Heart right ventricle (tissue), 16 donors: ENCODE measurements at regions of chrX and their contacts with region 1.

Region 1: DNA sequence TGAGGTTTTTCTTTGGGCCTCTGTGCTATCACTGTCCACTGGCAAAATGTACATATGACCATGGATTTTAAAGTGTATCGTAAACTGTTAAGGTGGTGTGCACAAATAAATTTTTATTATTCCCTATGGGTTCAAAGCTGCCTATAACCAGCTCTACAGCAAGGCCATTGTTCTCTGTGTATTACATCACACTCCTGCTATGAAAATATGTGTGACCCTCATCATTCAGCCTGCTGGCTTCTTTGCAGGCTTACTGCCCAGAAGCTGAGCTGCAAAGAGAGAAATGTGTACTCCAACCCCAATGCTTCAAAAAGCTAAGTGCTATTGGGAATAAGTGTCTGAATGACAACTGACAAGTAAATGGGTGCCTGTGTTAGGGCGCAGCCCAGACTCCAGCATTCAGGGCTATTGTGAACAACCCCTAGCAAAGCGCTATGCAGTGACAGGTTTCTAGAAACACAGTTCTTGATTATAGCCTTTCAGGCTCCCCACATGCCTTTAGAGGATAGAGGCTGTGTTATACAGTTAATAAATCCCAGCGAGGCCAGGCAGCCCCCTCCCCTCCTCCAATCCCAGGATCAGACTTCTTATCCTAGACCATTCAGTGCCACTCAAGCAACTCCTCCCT is 220.4 kb upstream of the RADX start:
- DNase-seq: no peak
- ATAC-seq: no peak
- H3K4me3 ChIP-seq: no peak overlapping the region
- H3K27ac ChIP-seq: no peak overlapping the region
- H3K4me1 ChIP-seq: no peaks in the 10 kb centered on the region
- H3K27me3 ChIP-seq: peaks cover 0 to 18% (median 0%) of the 10 kb centered on the region in 7 donors
- CTCF ChIP-seq: no peak

Region 2: GRCh38 chrX:106170318-106170717 is 221.1 kb before region 1 on chrX:
- intact Hi-C with region 1: loop called in 2 of 10 experiments (anchors 5 to 10 kb)
- DNase-seq: no peak
- ATAC-seq: no peak
- H3K4me3 ChIP-seq: no peak overlapping the region
- H3K27ac ChIP-seq: no peak overlapping the region
- H3K4me1 ChIP-seq: no peaks in the 10 kb centered on the region
- H3K27me3 ChIP-seq: peaks cover 0 to 28% (median 0%) of the 10 kb centered on the region in 7 donors
- CTCF ChIP-seq: peak in 7 of 9 donors; percentile 38 to 59 (median 53)